ENCODE measurements at regions of chr3 and their contacts with region 1.

Region 1: DNA sequence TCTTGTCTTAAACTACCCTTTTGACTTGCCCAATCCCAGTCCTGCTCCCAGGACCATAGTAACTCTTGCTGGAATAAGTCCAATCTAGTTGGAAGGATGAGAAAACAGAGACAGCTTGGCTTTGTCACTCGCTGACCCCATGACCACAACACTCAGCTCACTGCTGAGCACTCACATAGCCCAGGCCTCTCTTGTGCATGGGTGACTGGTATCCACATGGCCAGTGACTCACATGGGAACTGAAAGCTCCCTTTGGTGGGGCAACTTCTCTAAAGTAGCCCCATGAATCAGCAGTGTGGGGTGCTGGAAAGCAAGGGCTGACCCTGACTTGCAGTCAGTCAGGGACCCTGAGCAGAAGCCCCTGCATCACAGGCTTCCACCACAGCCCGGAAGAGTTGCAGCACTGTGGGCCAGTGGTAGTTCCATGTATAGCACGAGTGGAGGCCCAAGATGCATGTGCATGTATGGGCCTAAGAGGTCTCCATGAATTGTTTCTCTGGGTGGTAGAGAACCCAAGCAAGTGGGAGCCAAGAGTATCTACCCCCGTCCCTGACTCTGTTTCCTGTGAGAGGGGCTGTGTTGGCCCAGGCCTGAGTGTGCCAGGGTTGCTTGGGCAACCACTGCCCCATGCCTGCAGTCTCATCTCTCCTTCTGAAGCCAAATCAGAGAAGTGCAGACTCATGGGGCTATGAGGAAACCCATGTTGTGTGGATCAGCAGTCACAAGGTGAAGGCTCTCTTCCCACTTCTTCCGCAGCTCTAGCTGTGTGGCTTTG is 62.1 kb upstream of the XCR1 start:
- DNase-seq: peak; percentile 58
- H3K4me3 ChIP-seq: no peak overlapping the region
- H3K27ac ChIP-seq: peak overlapping the region; percentile 37 to 48 (median 42)
- H3K4me1 ChIP-seq: peaks cover 0 to 15% (median 1%) of the 10 kb centered on the region in 4 donors
- H3K27me3 ChIP-seq: no peaks in the 10 kb centered on the region
- CTCF ChIP-seq: no peak
- EP300 ChIP-seq: peak; percentile 15
- POLR2A ChIP-seq: no peak

Region 2: DNA sequence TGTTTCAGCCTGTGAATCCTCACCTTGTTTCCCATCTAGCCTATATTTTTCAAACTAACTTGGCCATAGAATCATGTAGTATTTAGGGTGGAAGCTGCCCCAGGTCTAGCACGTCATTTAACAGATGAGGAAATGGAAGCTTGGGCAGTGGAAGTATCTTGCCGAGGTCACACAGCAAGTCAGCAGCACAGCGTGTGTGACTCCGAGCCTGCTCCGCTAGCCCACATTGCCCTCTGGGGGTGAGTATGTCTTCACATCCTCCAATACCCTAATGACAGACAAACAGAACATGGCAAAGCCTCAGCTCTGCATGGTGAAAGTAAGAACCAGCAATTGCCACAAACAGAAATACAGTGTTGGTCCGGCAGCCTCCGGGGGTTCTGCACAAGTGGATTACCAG is 279.1 kb after region 1 on chr3:
- in situ Hi-C with region 1: loop called in 3 of 4 experiments (anchors 10 to 25 kb)
- intact Hi-C with region 1: no loop called
- DNase-seq: peak; percentile 77
- H3K4me3 ChIP-seq: no peak overlapping the region
- H3K27ac ChIP-seq: peak overlapping the region in 3 of 4 donors; percentile 17 to 56 (median 36)
- H3K4me1 ChIP-seq: no peaks in the 10 kb centered on the region
- H3K27me3 ChIP-seq: no peaks in the 10 kb centered on the region
- CTCF ChIP-seq: peak in 3 of 5 experiments; percentile 18 to 33 (median 24)
- EP300 ChIP-seq: no peak
- POLR2A ChIP-seq: no peak

Region 3: DNA sequence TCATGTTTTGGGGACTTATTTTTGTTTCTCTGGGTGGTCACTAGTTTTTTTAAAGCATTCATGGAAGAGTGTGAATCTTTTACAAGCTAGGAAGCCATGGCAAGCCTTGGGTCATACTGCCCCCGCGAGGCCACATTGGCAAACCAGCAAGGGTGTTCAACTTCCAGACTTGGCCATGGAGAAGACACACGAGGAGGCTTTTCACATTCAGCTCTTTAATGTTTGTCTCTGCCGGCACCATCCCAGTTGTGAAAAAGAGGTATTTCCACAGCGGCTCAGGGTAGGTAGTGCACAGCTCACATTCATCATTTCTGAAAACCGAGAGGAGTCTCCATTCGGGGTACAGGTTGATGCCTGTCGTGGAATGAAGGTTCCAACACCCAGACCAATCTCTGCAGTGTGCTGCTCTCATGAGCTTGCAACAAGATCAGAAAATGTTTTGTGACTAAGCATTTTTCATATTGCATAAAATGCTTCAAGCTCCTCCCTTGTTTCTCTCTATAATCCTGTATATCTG is 289.1 kb after region 1 on chr3:
- in situ Hi-C with region 1: loop called in 2 of 4 experiments (anchors 10 to 25 kb)
- intact Hi-C with region 1: no loop called
- DNase-seq: peak; percentile 76
- H3K4me3 ChIP-seq: no peak overlapping the region
- H3K27ac ChIP-seq: no peak overlapping the region
- H3K4me1 ChIP-seq: peaks cover 0 to 22% (median 8%) of the 10 kb centered on the region in 4 donors
- H3K27me3 ChIP-seq: no peaks in the 10 kb centered on the region
- CTCF ChIP-seq: peak; percentile 46 to 61 (median 58)
- EP300 ChIP-seq: no peak
- POLR2A ChIP-seq: no peak

Region 4: GRCh38 chr3:46442576-46443562 is 353.4 kb after region 1 on chr3:
- in situ Hi-C with region 1: loop called in 1 of 4 experiments (anchors 10 kb)
- intact Hi-C with region 1: no loop called
- DNase-seq: peak; percentile 72
- H3K4me3 ChIP-seq: no peak overlapping the region
- H3K27ac ChIP-seq: no peak overlapping the region
- H3K4me1 ChIP-seq: peaks cover 0 to 6% (median 2%) of the 10 kb centered on the region in 4 donors
- H3K27me3 ChIP-seq: no peaks in the 10 kb centered on the region
- CTCF ChIP-seq: peak in 3 of 5 experiments; percentile 71 to 83 (median 76)
- EP300 ChIP-seq: no peak
- POLR2A ChIP-seq: no peak

Measured in transverse colon (tissue), 4 donors.